PC-9 (cell line): ENCODE measurements at regions of chr7 and their contacts with region 1.

Region 1: DNA sequence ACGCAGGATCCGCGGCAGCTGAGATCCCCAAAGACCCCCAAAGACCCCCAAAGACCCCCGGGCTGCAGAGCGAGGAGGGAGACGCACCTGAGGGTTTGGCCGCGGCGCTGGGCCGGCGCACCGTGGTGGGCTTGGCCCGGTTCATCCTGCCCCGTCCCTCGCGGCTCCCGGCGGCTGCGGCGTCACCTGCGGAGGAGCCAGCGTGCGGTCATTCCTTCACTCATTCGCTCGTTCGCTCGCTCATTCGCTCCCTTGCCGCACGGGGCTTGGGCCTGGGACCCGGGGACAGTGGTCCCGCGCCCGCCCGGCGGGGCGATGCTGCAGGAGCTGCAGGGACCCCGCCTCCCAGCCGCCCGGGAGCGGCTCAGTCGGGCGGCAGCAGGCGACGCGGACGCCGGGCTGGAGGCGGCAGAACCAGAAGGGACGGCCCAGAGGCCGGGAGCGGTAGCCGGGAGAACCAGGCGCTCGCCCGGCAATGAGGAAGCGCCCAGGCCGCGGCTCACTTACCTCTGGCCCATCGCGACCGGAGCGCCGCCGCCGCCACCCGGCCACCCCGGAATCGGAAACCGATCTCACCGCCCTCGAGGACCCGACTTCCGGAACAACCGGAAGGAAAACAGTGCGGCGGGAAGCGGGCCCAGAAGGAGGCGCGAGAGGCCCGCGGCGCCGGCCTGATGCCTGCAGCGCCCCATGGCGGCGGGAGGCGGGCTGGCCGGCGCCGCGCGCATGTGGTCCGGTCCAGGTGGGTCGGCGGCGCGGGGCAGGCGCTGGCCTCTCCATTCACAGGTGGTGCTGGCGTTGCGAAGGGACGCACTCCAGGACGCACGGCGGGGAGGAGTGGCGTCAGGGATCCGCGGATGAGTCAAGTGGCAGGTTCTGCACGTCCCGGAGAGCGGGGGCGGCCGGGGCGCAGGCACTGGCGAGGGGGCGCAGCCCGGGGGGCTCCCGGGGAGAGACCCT is at the start of gene INTS1:
- DNase-seq: peak; percentile 90 to 99
- H3K4me3 ChIP-seq: peak within 1 kb of the TSS; percentile 99
- H3K27ac ChIP-seq: peak within 1 kb of the TSS; percentile 45
- H3K4me1 ChIP-seq: peaks cover 33% of the 10 kb centered on the region
- H3K27me3 ChIP-seq: no peaks in the 10 kb centered on the region
- CTCF ChIP-seq: peak; percentile 70
- total RNA-seq, gene INTS1: 124 and 170 TPM in 2 replicates

Region 2: GRCh38 chr7:1459522-1459892 is 44.6 kb before region 1 on chr7:
- CTCF ChIA-PET with region 1: interaction called, 6 read pairs
- POLR2A ChIA-PET with region 1: interaction called, 54 read pairs
- intact Hi-C with region 1: no loop called
- DNase-seq: peak; percentile 92 to 100
- H3K4me3 ChIP-seq: peak overlapping the region; percentile 97; the same call in 1 of the 2 replicates
- H3K27ac ChIP-seq: no peak overlapping the region
- H3K4me1 ChIP-seq: peaks cover 39% of the 10 kb centered on the region
- H3K27me3 ChIP-seq: no peaks in the 10 kb centered on the region
- CTCF ChIP-seq: no peak

Region 3: GRCh38 chr7:1520574-1521234 is 16.6 kb after region 1 on chr7:
- CTCF ChIA-PET with region 1: no interaction called
- POLR2A ChIA-PET with region 1: no interaction called
- intact Hi-C with region 1: loop called (anchors 2 kb)
- DNase-seq: peak; percentile 97 to 100
- H3K4me3 ChIP-seq: peak overlapping the region; percentile 16; the same call in 1 of the 2 replicates
- H3K27ac ChIP-seq: peak overlapping the region; percentile 89
- H3K4me1 ChIP-seq: peaks cover 29% of the 10 kb centered on the region
- H3K27me3 ChIP-seq: no peaks in the 10 kb centered on the region
- CTCF ChIP-seq: no peak

Region 4: GRCh38 chr7:1532483-1533424 is 28.7 kb after region 1 on chr7:
- CTCF ChIA-PET with region 1: interaction called, 12 read pairs
- POLR2A ChIA-PET with region 1: no interaction called
- intact Hi-C with region 1: loop called (anchors 1 kb)
- DNase-seq: peak; percentile 88 to 97
- H3K4me3 ChIP-seq: peak overlapping the region; percentile 64
- H3K27ac ChIP-seq: peak overlapping the region; percentile 89
- H3K4me1 ChIP-seq: peaks cover 52% of the 10 kb centered on the region
- H3K27me3 ChIP-seq: no peaks in the 10 kb centered on the region
- CTCF ChIP-seq: no peak

Region 5: GRCh38 chr7:1537535-1538412 is 33.7 kb after region 1 on chr7:
- CTCF ChIA-PET with region 1: interaction called, 12 read pairs
- POLR2A ChIA-PET with region 1: no interaction called
- intact Hi-C with region 1: loop called (anchors 1 kb)
- DNase-seq: peak in 1 of 2 experiments; percentile 89
- H3K4me3 ChIP-seq: peak overlapping the region; percentile 53
- H3K27ac ChIP-seq: peak overlapping the region; percentile 69
- H3K4me1 ChIP-seq: peaks cover 47% of the 10 kb centered on the region
- H3K27me3 ChIP-seq: no peaks in the 10 kb centered on the region
- CTCF ChIP-seq: no peak

Region 6: GRCh38 chr7:1664711-1665548 is 160.8 kb after region 1 on chr7:
- CTCF ChIA-PET with region 1: no interaction called
- POLR2A ChIA-PET with region 1: no interaction called
- intact Hi-C with region 1: loop called (anchors 5 kb)
- DNase-seq: peak in 1 of 2 experiments; percentile 66
- H3K4me3 ChIP-seq: peak overlapping the region; percentile 38; the same call in 1 of the 2 replicates
- H3K27ac ChIP-seq: no peak overlapping the region
- H3K4me1 ChIP-seq: peaks cover 8% of the 10 kb centered on the region; the same call in 1 of the 2 replicates
- H3K27me3 ChIP-seq: peaks cover 60% of the 10 kb centered on the region
- CTCF ChIP-seq: peak; percentile 79

Region 7: DNA sequence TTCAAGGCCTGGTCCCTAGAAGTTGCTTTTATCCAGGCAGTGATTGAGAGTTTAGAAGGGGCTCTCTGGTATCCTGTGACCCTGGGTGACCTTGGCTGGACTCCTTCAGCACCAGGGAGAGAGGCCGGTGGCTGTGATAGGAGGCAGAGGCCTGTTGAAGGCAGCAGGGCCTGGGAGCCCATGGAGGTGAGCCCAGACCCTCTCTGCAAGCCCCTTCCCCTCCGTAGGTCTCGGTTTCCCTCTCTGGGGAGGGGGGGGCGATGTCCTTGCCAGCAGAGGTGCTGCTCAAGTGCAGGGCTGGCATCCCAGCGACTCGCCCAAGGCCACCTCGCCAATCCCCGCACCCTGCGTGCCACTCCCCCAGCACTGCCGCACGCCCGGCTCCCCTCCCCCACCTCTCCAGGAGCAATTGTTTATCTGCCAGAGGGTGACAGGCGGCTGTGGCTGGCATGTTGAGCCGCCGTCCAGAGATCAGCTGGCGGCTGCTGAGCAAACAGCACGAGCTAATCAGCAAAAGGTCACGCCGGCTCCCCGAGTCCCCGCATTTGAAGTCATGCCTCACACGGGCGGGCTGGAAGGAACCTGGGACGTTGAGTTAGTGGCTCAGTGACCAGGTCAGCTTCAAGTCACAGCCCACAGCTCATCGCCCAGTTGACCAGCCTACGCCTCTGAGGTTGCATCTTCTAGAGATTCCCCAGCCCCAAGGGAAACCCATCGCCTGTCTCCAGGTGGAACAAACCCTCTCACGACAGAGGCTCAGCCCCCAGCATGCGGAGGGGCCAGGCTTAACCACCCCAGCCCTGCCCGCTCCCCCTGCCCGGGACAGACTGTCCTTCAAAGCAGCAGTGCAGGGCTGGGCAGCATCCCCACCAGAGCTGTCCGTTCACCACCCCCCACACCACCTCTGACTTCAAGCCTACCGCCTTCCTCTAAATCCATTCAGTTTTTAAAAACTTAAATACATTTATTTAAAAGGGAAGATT is 209.7 kb after region 1 on chr7:
- CTCF ChIA-PET with region 1: no interaction called
- POLR2A ChIA-PET with region 1: no interaction called
- intact Hi-C with region 1: no loop called
- DNase-seq: no peak
- H3K4me3 ChIP-seq: no peak overlapping the region
- H3K27ac ChIP-seq: no peak overlapping the region
- H3K4me1 ChIP-seq: peaks cover 14% of the 10 kb centered on the region
- H3K27me3 ChIP-seq: peaks cover 44% of the 10 kb centered on the region
- CTCF ChIP-seq: no peak